Posterior vena cava (tissue), 2 donors: ENCODE measurements at regions of chr5 and their contacts with region 1.

Region 1: GRCh38 chr5:110803467-110804326 is 64.9 kb downstream of the SLC25A46 start:
- DNase-seq: no peak

Region 2: DNA sequence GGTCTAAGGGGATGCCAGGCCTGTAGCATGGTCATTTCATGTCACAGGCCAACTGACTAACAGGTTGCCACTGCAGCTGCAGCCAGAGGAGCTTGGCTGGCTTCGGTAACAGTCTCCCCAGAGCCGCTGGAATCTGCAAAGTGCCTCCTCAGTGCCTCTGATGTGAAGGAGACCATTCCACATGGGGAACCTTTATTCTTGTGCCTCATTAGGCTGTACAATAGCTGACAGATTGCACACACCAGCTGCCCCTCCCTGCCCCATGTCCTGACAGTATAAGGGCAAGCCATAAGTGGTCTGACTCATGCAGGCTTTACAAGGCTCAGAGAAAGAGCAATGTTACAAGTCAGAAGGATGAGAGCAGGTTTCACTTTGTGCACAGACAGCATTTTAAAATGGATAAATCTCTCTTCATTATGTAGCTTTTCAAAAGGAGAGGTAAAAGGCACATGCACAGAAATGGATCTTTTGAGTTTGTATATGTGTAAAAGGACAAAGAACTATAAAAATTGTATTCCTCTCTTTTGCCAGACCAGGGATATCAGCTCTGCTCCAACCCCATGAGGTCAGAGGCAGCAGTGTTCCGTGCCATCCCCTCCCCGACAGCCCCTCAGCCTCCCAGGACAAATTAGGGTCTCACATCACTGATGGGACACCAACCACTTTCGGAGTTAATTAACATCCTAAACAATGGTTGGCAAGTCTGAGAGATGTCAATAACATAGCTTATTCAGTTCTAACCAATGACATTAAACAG is 545.1 kb before region 1 on chr5:
- intact Hi-C with region 1: loop called in 1 of 2 experiments (anchors 5 kb)
- DNase-seq: no peak

Region 3: GRCh38 chr5:110790673-110791072 is 13.0 kb before region 1 on chr5:
- intact Hi-C with region 1: loop called in 1 of 2 experiments (anchors 1 kb)
- DNase-seq: no peak

Region 4: DNA sequence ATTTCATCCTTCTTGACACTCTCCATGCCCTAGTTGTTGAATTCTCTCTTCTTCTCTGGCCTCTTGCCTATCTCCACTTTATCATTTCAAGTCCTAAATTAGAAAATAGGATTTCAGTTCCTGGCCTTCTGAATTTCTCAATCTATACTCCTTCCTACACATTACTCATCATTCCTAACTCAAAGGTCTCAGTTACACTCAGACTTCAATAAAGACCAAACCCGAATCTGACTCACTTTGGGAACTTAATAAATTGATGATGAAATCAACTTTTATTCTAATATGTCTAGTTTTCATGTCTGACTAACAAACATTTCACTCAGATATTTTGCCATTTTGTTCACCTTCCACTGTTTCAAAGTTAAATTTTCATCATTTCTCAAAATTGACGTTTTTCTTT is 154.2 kb after region 1 on chr5:
- intact Hi-C with region 1: no loop called
- DNase-seq: no peak